WTC11 (cell line): ENCODE measurements at regions of chr15 and their contacts with region 1.

Region 1: DNA sequence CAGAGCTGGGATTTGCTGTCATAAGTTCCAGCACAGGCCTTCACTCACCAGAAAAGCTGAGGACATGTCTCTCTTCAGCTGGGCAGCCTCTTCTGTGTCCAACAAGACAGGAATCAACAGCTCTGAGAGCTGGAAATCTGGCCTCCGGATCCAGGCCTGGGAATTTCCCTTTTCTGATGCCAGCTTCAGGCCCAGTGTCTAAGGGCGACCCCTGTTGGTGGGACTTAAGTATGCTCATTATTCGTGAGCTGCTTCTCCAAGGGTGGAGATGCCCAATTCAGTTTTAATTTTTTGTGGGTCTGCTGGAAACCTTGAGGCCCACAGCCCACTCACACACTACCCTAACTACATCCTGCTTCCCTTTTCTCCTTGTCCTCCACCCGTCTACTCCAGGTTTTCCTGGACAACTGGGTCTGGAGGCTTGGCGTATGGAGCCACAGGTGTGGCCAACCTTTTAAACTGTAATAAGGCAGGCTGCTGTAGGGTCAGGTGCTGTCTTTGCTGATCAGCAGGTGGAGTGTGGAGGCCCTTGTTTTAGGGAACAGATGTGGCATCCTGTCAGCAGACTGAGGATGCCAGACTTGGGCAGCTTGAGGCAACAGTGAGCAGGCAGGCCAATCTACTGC is 2.6 kb upstream of the CEMIP start:
- DNase-seq: peak; percentile 75
- ATAC-seq: no peak
- H3K4me3 Mint-ChIP-seq: no peak overlapping the region
- H3K27ac Mint-ChIP-seq: no peak overlapping the region
- H3K4me1 Mint-ChIP-seq: peaks cover 11% of the 10 kb centered on the region
- H3K27me3 Mint-ChIP-seq: peaks cover 39% of the 10 kb centered on the region
- CTCF ChIP-seq: peak; percentile 83

Region 2: GRCh38 chr15:80436511-80437307 is 339.8 kb before region 1 on chr15:
- CTCF ChIA-PET with region 1: no interaction called
- POLR2A ChIA-PET with region 1: no interaction called
- DNase-seq: no peak
- ATAC-seq: no peak
- H3K4me3 Mint-ChIP-seq: no peak overlapping the region
- H3K27ac Mint-ChIP-seq: no peak overlapping the region
- H3K4me1 Mint-ChIP-seq: peaks cover 12% of the 10 kb centered on the region
- H3K27me3 Mint-ChIP-seq: no peaks in the 10 kb centered on the region
- CTCF ChIP-seq: no peak

Region 3: DNA sequence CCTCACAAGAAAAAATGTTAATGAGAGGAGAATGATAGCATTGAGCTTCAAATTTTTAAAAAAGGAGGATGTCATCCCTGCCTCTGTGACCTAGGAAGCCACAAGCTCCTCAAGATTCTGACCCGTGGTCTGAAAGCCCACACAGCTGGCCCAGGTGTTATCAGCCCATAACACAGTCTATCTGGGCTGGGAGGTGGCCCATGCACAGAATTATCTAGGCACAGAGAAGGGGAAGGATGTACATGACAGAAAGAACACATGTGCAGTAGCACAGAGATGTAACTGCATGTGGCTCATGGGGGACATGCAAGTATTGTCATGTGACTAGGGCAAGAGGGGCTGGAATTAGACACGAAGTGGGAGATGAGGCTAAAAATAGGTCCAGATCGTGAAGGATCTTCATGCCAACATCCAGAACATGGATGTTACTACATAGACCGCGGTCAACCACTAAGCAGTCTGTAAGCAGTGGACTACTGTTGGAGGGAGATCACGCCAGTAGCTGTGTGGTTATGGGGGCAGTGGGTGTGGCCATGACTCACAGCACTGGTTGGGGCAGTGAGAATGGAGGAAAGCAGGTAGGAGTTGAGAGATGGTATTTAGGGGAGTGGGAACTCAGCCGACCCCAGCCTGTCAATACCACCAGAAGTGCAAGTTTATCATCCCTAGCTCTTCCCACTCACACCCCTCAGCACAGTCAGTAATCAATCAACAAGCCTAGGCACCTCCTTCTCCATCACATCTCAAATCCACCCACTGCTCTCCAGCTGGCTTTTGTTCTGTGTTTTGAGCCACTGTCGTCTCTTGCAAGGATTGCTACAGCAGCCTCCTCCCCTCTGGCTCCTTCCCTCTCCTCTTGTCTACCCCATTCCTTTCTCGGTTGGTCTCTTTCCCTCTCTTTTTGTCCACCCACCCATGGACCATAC is 188.7 kb before region 1 on chr15:
- CTCF ChIA-PET with region 1: interaction called, 24 read pairs
- POLR2A ChIA-PET with region 1: no interaction called
- DNase-seq: no peak
- ATAC-seq: no peak
- H3K4me3 Mint-ChIP-seq: no peak overlapping the region
- H3K27ac Mint-ChIP-seq: no peak overlapping the region
- H3K4me1 Mint-ChIP-seq: peaks cover 26% of the 10 kb centered on the region
- H3K27me3 Mint-ChIP-seq: no peaks in the 10 kb centered on the region
- CTCF ChIP-seq: no peak

Region 4: GRCh38 chr15:80660122-80660521 is 116.4 kb before region 1 on chr15:
- CTCF ChIA-PET with region 1: interaction called, 129 read pairs
- POLR2A ChIA-PET with region 1: interaction called, 8 read pairs
- DNase-seq: peak; percentile 53
- ATAC-seq: peak; percentile 98
- H3K4me3 Mint-ChIP-seq: no peak overlapping the region
- H3K27ac Mint-ChIP-seq: no peak overlapping the region
- H3K4me1 Mint-ChIP-seq: peaks cover 5% of the 10 kb centered on the region; the same call in 1 of the 2 replicates
- H3K27me3 Mint-ChIP-seq: no peaks in the 10 kb centered on the region
- CTCF ChIP-seq: peak; percentile 48; the same call in 1 of the 2 replicates

Region 5: DNA sequence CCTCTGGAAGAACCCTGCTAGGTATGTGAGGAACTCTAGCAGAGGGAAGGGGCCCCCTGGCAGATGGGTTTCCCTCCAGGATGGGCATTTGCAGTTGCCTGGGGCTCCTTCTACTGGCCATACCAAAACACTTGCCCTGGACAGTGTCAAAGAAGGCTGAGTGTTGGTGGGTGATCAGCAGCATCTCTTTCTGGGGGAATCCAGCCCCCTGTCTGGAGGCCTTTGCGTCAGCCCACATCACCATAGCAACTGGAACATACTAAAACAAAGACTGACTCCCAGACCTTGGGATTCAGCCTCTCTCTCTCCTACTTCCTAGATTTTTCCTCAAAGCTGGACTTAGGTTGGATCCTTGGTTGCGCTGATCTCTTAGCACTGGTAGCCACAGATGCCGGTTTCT is 10.8 kb after region 1 on chr15:
- CTCF ChIA-PET with region 1: interaction called, 15 read pairs
- POLR2A ChIA-PET with region 1: no interaction called
- DNase-seq: peak; percentile 23
- ATAC-seq: peak; percentile 74
- H3K4me3 Mint-ChIP-seq: no peak overlapping the region
- H3K27ac Mint-ChIP-seq: no peak overlapping the region
- H3K4me1 Mint-ChIP-seq: peaks cover 8% of the 10 kb centered on the region
- H3K27me3 Mint-ChIP-seq: peaks cover 11% of the 10 kb centered on the region
- CTCF ChIP-seq: no peak

Region 6: DNA sequence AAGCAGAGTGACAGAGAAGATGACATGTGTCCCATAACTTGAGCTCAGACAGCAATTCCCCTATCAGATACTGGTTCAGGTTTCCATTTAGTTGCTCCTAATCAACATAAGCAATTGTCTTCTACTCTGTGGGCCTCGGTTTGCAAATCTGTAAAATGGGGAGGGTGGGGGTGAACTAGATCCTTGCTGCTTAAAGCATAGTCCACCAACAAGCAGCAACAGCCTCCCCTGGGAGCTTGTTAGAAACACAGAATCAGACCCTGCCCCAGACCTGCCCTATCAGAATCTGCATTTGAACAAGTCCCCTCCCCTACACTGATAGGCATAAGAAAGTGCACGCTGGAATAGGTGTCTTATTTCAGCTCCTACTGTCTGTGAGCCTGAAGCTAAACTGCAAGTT is 90.4 kb after region 1 on chr15:
- CTCF ChIA-PET with region 1: interaction called, 25 read pairs
- POLR2A ChIA-PET with region 1: no interaction called
- DNase-seq: peak; percentile 30
- ATAC-seq: peak; percentile 92
- H3K4me3 Mint-ChIP-seq: peak overlapping the region; percentile 28
- H3K27ac Mint-ChIP-seq: peak overlapping the region; percentile 87
- H3K4me1 Mint-ChIP-seq: peaks cover 53% of the 10 kb centered on the region
- H3K27me3 Mint-ChIP-seq: peaks cover 3% of the 10 kb centered on the region; the same call in 1 of the 2 replicates
- CTCF ChIP-seq: no peak

Region 7: GRCh38 chr15:80970018-80970658 is 193.6 kb after region 1 on chr15:
- CTCF ChIA-PET with region 1: interaction called, 48 read pairs
- POLR2A ChIA-PET with region 1: no interaction called
- DNase-seq: peak; percentile 52
- ATAC-seq: 0 out of 2 replicates have a peak, but pooled peaks have one; percentile 6
- H3K4me3 Mint-ChIP-seq: no peak overlapping the region
- H3K27ac Mint-ChIP-seq: peak overlapping the region; percentile 61; the same call in 1 of the 2 replicates
- H3K4me1 Mint-ChIP-seq: peaks cover 60% of the 10 kb centered on the region
- H3K27me3 Mint-ChIP-seq: no peaks in the 10 kb centered on the region
- CTCF ChIP-seq: peak; percentile 84